ENCODE measurements at regions of chr4 and their contacts with region 1.

Region 1: DNA sequence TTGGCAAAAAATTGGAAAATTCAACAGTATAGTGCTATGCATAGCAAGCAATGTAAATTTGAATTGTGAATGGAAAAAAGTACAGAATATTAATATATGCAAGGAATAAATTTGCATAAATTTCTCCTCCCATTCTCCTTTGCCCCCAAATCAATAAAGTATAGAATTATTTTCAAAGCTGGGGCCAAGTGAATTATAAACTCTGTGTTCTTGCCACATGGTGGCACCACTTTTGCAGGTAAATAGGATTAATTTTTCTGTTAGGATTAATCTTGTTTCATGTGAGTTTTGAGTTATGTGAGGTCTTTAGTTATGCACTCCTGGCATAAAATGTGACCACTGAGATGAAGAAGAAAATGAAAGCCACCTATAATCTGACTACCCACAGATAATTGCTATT is 19.9 kb downstream of the COPS4 start:
- H3K4me3 Mint-ChIP-seq: no peak overlapping the region
- H3K27ac Mint-ChIP-seq: no peak overlapping the region
- H3K4me1 Mint-ChIP-seq: no peaks in the 10 kb centered on the region
- H3K27me3 Mint-ChIP-seq: no peaks in the 10 kb centered on the region

Region 2: DNA sequence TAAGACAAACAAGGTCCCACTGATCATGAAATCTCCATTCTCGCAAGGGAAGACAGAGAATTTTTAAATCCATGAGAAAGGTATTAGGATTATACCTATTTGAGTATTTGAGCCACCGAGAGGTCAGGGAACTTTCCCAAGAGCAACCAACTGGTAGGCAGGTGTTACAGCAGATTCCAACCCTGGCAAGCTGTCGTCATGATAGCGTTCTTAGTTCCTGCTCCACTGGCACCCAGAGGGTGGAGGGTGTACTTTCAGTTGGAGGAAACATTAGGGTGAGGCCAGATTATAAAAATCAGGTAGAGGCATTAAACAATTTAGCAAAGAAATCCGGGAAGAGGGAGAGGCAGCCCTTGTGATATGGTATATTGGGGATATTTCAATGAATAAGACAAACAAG is 206.4 kb after region 1 on chr4:
- intact Hi-C with region 1: loop called (anchors 5 kb)
- H3K4me3 Mint-ChIP-seq: no peak overlapping the region
- H3K27ac Mint-ChIP-seq: no peak overlapping the region
- H3K4me1 Mint-ChIP-seq: peaks cover 8% of the 10 kb centered on the region
- H3K27me3 Mint-ChIP-seq: no peaks in the 10 kb centered on the region

Measured in dendritic cell treated with granulocyte-macrophage colony-stimulating factor and Interleukin-4, amounts not matched to agents 40 ng/mL and 50 ng/mL, for 4 days (primary cell).